ENCODE measurements at regions of chr11 and their contacts with region 1.

Region 1: DNA sequence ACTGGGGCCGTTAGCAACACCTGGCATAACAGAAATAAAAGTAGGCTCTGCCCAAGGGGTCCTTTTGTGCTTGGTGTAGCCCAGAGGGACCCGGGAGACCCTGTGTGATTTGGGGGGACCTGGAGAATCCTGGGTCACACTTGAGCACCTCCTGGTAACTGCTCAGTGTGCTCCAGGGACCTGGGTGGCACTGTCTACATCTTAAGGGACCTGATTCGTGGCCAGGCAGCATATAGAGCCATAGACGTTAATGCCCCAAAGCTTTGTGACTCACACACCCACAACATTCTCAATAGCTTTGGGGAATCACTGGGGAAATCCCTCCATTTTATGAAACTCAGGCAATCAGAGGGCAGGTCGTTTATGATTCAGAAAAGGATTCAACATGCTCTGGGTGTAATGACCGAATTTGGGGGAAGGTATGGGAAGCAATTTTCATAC is 3.6 kb upstream of the IGF2 start:
- DNase-seq: peak in 1 of 9 donors; percentile 42
- ATAC-seq: peak; percentile 38
- H3K4me3 ChIP-seq: no peak overlapping the region
- H3K4me3 Mint-ChIP-seq: peak overlapping the region in 3 of 10 donors; percentile 17 to 38 (median 19)
- H3K27ac ChIP-seq: no peak overlapping the region
- H3K27ac Mint-ChIP-seq: no peak overlapping the region
- H3K4me1 ChIP-seq: no peaks in the 10 kb centered on the region
- H3K4me1 Mint-ChIP-seq: peaks cover 0 to 18% (median 9%) of the 10 kb centered on the region in 7 donors
- H3K27me3 ChIP-seq: peaks cover 4 to 7% of the 10 kb centered on the region in 2 donors
- H3K27me3 Mint-ChIP-seq: peaks cover 35 to 64% (median 51%) of the 10 kb centered on the region in 5 donors

Region 2: DNA sequence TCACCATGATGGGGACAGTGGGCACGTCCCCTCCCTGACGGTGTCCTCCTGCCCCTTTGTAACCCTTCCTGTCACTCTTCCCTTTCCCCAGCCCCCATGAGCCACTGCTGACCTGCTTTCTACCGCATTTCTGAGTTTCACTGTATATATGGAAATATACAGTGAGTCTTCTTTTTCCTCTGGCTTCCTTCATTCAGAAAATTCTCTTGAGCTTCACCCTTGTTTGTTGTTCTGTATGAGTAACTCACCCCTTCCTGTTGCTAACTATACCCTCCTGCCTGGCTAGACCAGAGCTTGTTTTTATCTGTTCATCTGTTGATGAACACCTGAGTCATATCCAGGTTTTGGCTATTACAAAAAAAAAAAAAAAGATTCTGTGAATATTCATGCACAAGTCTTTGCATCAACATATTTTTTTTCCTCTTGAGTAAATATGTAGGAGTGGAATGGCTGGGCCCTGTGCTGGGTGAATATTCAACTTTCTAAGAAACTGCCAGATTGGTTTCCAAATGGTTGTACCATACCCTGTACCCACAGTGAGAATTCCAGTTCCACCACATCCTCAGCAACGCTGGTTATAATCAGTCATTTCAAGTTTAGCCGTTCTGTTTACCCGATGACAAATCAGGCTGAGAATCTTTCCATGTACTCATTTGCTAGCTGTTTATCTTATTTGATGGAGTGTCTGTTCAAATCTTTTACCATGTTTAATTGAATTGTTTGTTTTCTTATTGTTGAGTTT is 65.5 kb before region 1 on chr11:
- CTCF ChIA-PET with region 1: no interaction called
- POLR2A ChIA-PET with region 1: no interaction called
- intact Hi-C with region 1: loop called in 1 of 2 experiments (anchors 5 kb)
- DNase-seq: peak in 1 of 9 donors; percentile 50
- ATAC-seq: no peak
- H3K4me3 ChIP-seq: no peak overlapping the region
- H3K4me3 Mint-ChIP-seq: peak overlapping the region in 1 of 10 donors; percentile 26
- H3K27ac ChIP-seq: no peak overlapping the region
- H3K27ac Mint-ChIP-seq: peak overlapping the region in 5 of 9 donors; percentile 9 to 87 (median 40)
- H3K4me1 ChIP-seq: no peaks in the 10 kb centered on the region
- H3K4me1 Mint-ChIP-seq: peaks cover 0 to 16% (median 5%) of the 10 kb centered on the region in 7 donors
- H3K27me3 ChIP-seq: no peaks in the 10 kb centered on the region
- H3K27me3 Mint-ChIP-seq: peaks cover 0 to 16% (median 11%) of the 10 kb centered on the region in 5 donors

Measured in naive thymus-derived CD4-positive, alpha-beta T cell (primary cell).